ENCODE measurements at regions of chr1 and their contacts with region 1.

Region 1: GRCh38 chr1:179882243-179883039 is at the start of gene TOR1AIP1:
- DNase-seq: peak; percentile 98
- H3K4me3 Mint-ChIP-seq: peak within 1 kb of the TSS; percentile 96
- H3K27ac Mint-ChIP-seq: peak within 1 kb of the TSS; percentile 99
- H3K4me1 Mint-ChIP-seq: peaks cover 57% of the 10 kb centered on the region
- H3K27me3 Mint-ChIP-seq: no peaks in the 10 kb centered on the region
- total RNA-seq, gene TOR1AIP1: 39.4 to 42.3 TPM

Region 2: GRCh38 chr1:179025125-179025974 is 857.1 kb before region 1 on chr1 and contains the start of gene FAM20B:
- CTCF ChIA-PET with region 1: no interaction called
- intact Hi-C with region 1: loop called (anchors 5 kb)
- DNase-seq: peak; percentile 91
- H3K4me3 Mint-ChIP-seq: peak within 1 kb of the TSS; percentile 85
- H3K27ac Mint-ChIP-seq: peak within 1 kb of the TSS; percentile 78
- H3K4me1 Mint-ChIP-seq: peaks cover 34% of the 10 kb centered on the region
- H3K27me3 Mint-ChIP-seq: no peaks in the 10 kb centered on the region
- total RNA-seq, gene FAM20B: 35.1 to 36.1 TPM

Region 3: GRCh38 chr1:179365320-179366092 is 516.9 kb before region 1 on chr1 and contains the start of gene AXDND1:
- CTCF ChIA-PET with region 1: no interaction called
- intact Hi-C with region 1: loop called (anchors 5 kb)
- DNase-seq: peak; percentile 94
- H3K4me3 Mint-ChIP-seq: peak within 1 kb of the TSS; percentile 93
- H3K27ac Mint-ChIP-seq: peak within 1 kb of the TSS; percentile 100
- H3K4me1 Mint-ChIP-seq: peaks cover 21% of the 10 kb centered on the region
- H3K27me3 Mint-ChIP-seq: no peaks in the 10 kb centered on the region
- total RNA-seq, gene AXDND1: 0.57 to 0.67 TPM

Region 4: DNA sequence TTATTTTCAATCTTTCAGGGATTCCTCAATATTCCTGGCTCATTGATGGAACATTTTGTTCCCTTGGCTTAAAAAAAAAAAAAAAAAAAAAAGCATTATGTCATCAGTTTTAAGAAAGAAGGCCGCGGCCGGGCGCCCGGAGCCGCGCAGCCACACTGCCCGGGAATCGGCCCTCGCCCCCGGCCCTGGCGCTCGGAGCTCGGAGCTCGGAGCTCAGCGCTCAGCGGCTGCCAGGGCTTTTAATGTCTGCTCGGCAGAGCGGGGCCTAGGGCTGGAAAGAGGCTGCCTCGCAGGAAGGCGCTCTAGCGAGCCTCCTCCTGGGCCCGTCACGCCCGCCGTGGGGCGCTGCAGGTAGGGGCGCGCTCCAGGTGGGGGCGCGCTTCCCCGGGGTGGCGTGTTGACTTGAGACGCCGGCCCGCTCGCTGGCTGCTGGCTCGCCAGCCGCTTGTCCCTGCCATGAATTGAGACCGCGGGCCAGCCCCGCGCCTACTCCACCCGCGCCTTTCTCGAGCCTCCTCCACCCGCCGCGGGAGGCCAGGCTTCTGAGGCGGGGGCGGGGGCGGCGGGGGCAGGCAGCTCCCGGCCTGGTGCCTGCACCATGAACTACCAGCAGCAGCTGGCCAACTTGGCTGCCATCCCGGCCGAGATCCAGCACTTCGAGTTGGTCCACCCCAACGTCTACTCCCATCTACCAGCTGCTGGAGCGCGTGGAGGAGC is 296.2 kb before region 1 on chr1:
- CTCF ChIA-PET with region 1: no interaction called
- intact Hi-C with region 1: no loop called
- DNase-seq: peak; percentile 7
- H3K4me3 Mint-ChIP-seq: no peak overlapping the region
- H3K27ac Mint-ChIP-seq: no peak overlapping the region
- H3K4me1 Mint-ChIP-seq: peaks cover 3% of the 10 kb centered on the region
- H3K27me3 Mint-ChIP-seq: peaks cover 52% of the 10 kb centered on the region

Region 5: DNA sequence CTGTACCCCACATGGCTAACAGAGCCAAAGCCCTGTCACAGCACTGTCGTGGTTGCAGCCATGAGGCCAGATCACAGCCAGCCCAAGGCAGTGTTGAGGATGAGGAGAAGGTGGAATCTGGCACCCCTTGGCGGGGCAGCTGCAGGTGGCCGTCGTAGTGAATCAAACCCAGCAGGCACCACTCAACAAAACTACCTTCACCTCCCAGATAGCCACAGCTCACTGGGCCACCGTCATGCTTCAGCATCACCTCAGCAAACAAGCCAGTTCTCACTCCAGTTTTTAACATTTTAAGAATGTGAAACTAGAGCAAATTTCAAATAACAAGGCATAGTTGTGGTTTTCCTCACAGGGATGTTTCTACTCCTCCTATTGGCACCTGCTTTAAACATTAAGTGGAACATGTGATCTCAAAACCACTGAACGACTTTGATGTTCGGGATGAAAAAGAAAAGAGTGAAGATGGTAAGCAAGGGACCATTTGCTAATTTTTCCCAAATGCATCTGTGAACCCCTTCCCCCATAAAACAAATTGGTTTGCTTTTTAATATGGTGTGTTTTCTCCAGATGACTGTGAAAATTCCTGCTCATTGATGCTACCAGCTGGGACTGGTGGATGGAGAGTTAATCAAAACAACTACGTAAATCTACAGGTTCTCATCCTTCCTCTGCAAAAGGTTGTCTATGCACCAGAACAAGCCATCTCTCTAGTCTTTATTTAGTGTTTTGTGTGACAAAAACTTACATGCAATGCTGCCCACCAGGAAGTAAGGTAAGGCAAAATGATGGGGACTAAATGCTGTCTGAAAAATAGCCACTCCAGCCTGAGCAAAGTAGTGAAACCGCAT is 50.4 kb before region 1 on chr1:
- CTCF ChIA-PET with region 1: no interaction called
- intact Hi-C with region 1: loop called (anchors 2 kb)
- DNase-seq: peak; percentile 57
- H3K4me3 Mint-ChIP-seq: no peak overlapping the region
- H3K27ac Mint-ChIP-seq: peak overlapping the region; percentile 15
- H3K4me1 Mint-ChIP-seq: peaks cover 30% of the 10 kb centered on the region
- H3K27me3 Mint-ChIP-seq: no peaks in the 10 kb centered on the region

Region 6: GRCh38 chr1:180080433-180080832 is 198.0 kb after region 1 on chr1:
- CTCF ChIA-PET with region 1: no interaction called
- intact Hi-C with region 1: loop called (anchors 5 kb)
- DNase-seq: peak; percentile 8
- H3K4me3 Mint-ChIP-seq: no peak overlapping the region
- H3K27ac Mint-ChIP-seq: no peak overlapping the region
- H3K4me1 Mint-ChIP-seq: peaks cover 2% of the 10 kb centered on the region
- H3K27me3 Mint-ChIP-seq: no peaks in the 10 kb centered on the region

Region 7: DNA sequence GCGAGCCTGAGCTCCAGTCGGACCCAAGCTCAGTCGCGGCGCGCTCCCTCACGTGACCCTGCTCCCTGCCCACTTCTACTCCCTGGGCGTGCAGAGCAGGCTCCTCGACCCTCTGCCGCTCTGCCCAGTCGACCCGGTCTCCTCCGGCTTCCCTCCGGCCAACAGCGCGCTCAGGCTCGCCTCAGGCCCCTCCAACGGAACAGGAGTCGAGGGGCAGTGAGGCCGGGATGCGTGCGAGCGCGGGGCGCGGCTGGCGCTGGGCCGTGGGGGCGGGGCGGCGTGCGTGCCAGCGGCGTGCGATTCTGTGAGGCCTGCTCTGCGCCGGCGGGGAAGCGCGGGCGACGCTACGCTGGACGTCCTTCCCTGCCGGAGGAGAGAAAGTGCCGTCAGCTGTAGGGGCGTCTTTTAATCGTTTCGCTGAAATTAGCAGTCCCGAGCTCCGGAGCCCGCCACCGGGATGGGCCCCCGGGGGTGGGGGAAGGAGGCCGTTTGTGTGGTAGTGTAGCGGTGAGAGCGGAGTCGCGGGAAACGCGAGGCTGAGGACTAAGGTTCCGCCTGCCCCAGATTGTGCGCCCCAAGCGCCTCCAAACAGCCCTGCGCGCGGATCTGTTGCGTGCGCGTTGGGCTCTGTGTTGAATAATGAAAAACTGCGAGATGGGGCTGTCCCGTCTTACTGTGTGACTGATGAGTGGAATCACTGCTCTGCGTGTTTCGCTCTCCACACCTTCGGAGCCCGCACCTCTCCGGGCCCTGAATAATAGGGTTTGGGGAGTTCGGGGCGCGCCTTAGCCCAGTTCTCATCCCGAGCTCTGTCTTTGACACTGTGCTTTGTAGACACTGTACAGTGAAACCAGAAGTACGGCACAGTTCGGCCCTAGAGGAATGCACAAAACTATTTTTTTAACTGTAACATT is 620.2 kb after region 1 on chr1 and contains the start of gene ACBD6:
- CTCF ChIA-PET with region 1: no interaction called
- intact Hi-C with region 1: loop called (anchors 1 kb)
- DNase-seq: peak; percentile 92
- H3K4me3 Mint-ChIP-seq: peak within 1 kb of the TSS; percentile 98
- H3K27ac Mint-ChIP-seq: peak within 1 kb of the TSS; percentile 93
- H3K4me1 Mint-ChIP-seq: peaks cover 34% of the 10 kb centered on the region
- H3K27me3 Mint-ChIP-seq: no peaks in the 10 kb centered on the region
- total RNA-seq, gene ACBD6: 31.1 to 32.9 TPM

Region 8: GRCh38 chr1:181088079-181089016 is 1205.9 kb after region 1 on chr1 and contains the start of gene IER5:
- CTCF ChIA-PET with region 1: no interaction called
- intact Hi-C with region 1: loop called (anchors 10 kb)
- DNase-seq: peak; percentile 96
- H3K4me3 Mint-ChIP-seq: peak within 1 kb of the TSS; percentile 99
- H3K27ac Mint-ChIP-seq: peak within 1 kb of the TSS; percentile 99
- H3K4me1 Mint-ChIP-seq: peaks cover 44% of the 10 kb centered on the region
- H3K27me3 Mint-ChIP-seq: no peaks in the 10 kb centered on the region
- total RNA-seq, gene IER5: 33.5 to 34.4 TPM

Measured in activated naive CD4-positive, alpha-beta T cell treated with anti-CD3 and anti-CD28 coated beads for 36 hours (primary cell).